GM23248 (cell line): ENCODE measurements at regions of chr13 and their contacts with region 1.

Region 1: GRCh38 chr13:20197361-20197834 is 4.7 kb upstream of the GJB2 start:
- DNase-seq: peak; percentile 63
- H3K4me3 ChIP-seq: no peak overlapping the region
- H3K27ac ChIP-seq: no peak overlapping the region
- H3K4me1 ChIP-seq: peaks cover 7% of the 10 kb centered on the region; the same call in 1 of the 2 replicates
- H3K27me3 ChIP-seq: peaks cover 42% of the 10 kb centered on the region

Region 2: DNA sequence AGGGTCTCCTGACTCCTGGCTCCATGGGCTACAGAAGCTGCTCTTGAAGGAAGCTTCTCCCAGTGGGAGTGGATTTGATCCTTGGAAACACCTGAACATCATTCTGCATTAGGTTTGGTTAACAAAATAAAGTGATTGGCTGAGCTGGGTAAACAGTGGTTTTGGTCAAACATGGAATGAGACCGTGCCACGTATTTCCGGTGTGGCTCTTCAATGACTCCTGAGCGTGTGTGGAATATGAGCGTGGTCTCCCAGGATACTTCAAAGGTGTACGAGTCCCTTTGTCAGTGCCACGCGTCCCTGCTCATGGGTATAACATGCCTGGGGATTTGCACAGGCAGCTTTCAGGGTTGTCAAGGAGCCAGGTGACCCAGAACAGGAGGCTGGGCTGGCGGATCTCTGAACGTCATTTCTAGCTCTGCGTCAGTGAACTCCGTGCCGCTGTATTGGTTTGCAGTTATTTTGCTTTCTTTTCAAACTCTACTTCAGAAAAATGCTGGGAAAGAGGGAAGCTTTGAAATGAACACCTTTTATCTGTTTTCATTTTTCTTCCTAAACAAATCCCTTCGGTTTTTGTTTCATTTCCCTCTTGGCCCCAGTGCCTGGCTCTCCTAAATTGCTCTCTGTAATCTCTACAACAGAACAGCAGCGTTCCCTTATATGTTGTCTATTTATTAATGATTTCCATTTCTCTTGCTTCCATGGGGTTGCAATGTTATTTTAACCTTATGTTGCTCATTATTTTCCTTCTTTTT is 61.0 kb after region 1 on chr13:
- in situ Hi-C with region 1: no loop called
- DNase-seq: peak; percentile 35
- H3K4me3 ChIP-seq: peak overlapping the region; percentile 61
- H3K27ac ChIP-seq: no peak overlapping the region
- H3K4me1 ChIP-seq: no peaks in the 10 kb centered on the region
- H3K27me3 ChIP-seq: peaks cover 31% of the 10 kb centered on the region

Region 3: GRCh38 chr13:20489185-20489820 is 291.9 kb after region 1 on chr13:
- in situ Hi-C with region 1: loop called (anchors 10 kb)
- DNase-seq: no peak
- H3K4me3 ChIP-seq: no peak overlapping the region
- H3K27ac ChIP-seq: no peak overlapping the region
- H3K4me1 ChIP-seq: no peaks in the 10 kb centered on the region
- H3K27me3 ChIP-seq: no peaks in the 10 kb centered on the region